ENCODE measurements at regions of chr3 and their contacts with region 1.

Region 1: GRCh38 chr3:23648326-23648995 is 157.3 kb upstream of the UBE2E1 start:
- DNase-seq: no peak
- H3K4me3 ChIP-seq: no peak overlapping the region
- H3K27ac ChIP-seq: no peak overlapping the region
- H3K4me1 ChIP-seq: peaks cover 34% of the 10 kb centered on the region
- H3K27me3 ChIP-seq: no peaks in the 10 kb centered on the region
- CTCF ChIP-seq: peak in 1 of 2 donors; percentile 29

Region 2: DNA sequence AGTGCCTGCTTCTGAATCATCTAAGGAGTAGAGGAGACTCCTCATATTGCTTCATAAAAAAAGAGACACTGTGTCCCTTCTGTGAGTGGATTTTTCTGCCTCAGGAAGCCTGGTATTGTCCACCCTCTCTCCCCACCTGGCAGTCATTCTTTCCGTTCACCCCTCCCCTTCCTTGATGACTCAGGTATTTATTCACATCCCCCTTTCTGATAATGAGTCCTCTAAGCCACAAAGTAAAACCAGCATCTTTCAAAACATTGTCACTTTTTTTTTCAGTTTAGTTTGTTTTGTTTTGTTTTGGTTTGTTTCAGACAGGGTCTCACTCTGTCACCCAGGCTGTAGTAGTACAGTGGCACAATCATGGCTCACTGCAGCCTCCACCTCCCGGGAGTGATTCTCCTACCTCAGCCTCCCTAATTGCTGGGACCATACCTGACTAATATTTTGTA is 92.1 kb after region 1 on chr3:
- CTCF ChIA-PET with region 1: no interaction called
- dilution Hi-C with region 1: no loop called
- in situ Hi-C with region 1: no loop called
- intact Hi-C with region 1: loop called (anchors 2 kb)
- DNase-seq: peak; percentile 93
- H3K4me3 ChIP-seq: peak overlapping the region in 1 of 3 experiments; percentile 27
- H3K27ac ChIP-seq: peak overlapping the region; percentile 98
- H3K4me1 ChIP-seq: peaks cover 39% of the 10 kb centered on the region
- H3K27me3 ChIP-seq: no peaks in the 10 kb centered on the region
- CTCF ChIP-seq: no peak

Measured in mammary epithelial cell (primary cell).